Psoas muscle (tissue), 8 donors: ENCODE measurements at regions of chr1 and their contacts with region 1.

Region 1: DNA sequence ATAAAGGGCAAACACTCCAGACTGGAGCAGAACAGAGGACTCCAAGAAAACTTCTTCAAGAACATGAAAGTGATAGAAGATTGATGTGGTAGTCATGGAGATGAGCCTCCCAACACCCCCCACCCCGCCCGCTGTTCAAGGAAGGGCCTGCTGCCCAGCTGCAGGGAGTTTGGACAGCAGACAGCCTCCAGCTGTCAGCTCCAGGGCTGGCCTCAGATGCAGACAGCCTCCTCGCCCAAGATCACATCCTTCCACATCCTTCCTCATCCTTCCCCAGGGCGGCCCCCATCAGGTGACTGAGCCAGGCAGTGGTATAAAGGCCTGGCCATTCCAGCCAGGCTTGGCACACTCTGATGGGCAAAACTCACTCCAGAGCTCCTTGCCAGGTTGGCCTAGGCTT is 24.6 kb downstream of the HMGN2 start:
- DNase-seq: no peak
- ATAC-seq: no peak
- H3K4me3 ChIP-seq: no peak overlapping the region
- H3K27ac ChIP-seq: no peak overlapping the region
- H3K4me1 ChIP-seq: no peaks in the 10 kb centered on the region
- H3K27me3 ChIP-seq: no peaks in the 10 kb centered on the region
- CTCF ChIP-seq: no peak

Region 2: DNA sequence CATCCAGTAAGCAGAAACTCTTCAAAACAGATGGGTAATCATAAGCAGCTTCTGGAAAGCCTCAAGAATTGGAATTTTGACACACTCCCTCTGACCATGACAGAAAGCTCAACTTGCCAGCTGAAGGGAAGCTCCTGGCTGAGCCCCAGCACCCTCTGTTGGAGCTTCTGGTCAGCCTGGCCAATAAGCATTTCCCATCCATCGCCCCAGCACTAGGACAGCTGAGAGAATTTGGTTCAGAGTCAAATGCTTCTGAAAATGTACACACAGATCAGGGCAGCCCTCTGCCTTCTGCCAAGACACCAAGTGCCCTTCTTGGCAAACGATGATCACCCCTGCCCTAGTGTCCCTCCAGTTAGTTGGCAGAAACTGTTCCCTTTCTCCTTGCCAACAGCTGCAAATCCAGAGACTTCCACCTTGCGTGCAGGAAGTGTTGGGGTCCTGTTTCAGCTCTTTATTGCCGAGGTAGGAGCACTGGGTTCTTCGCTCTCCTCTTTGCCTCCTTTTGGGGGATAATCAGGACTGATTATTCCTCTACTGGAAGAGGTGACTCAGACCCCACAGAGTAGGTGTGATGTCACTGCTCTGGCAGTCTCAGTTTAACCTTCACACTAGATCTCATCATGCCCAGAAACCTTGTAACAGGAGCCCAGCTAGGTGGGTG is 302.8 kb after region 1 on chr1:
- intact Hi-C with region 1: loop called in 1 of 2 experiments (anchors 10 kb)
- DNase-seq: peak; percentile 66 to 83
- ATAC-seq: peak; percentile 88 to 91 (median 90)
- H3K4me3 ChIP-seq: peak overlapping the region; percentile 22
- H3K27ac ChIP-seq: peak overlapping the region; percentile 79
- H3K4me1 ChIP-seq: peaks cover 40% of the 10 kb centered on the region
- H3K27me3 ChIP-seq: no peaks in the 10 kb centered on the region
- CTCF ChIP-seq: no peak